PC-9 (cell line): ENCODE measurements at regions of chr12 and their contacts with region 1.

Region 1: DNA sequence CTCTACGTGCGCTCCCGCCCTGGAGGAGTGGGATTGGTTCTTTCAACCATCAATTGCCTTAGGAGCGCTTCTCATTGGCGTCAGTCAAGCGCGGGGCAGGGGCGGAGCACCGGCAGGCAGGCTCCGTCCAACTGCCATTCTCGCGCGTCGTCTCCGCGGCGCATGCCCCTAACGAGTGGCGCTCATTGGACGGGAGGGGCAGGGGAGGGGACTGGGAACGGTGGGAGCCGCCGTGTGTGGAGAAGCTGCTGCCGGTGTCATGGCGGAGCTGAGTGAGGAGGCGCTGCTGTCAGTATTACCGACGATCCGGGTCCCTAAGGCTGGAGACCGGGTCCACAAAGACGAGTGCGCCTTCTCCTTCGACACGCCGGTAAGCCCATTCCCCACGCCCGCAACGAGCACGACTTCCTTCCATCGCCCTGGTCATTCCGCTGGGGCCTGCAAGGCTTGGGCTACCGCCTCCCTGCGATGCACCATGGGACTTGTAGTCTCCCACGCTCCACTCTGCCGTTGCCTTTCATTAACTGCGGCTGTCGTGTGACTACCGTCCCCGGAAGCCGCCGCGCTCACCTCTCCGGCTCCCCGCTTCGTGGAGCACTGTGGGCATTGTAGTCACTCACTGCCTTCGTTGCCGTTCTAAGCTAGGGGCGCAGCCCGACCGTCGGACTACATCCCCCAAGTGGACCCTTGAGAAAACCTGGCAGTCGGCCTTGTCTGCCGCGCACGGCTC is at the start of gene USP5:
- DNase-seq: peak; percentile 99 to 100
- H3K4me3 ChIP-seq: peak within 1 kb of the TSS; percentile 83
- H3K27ac ChIP-seq: peak within 1 kb of the TSS; percentile 69
- H3K4me1 ChIP-seq: peaks cover 25% of the 10 kb centered on the region
- H3K27me3 ChIP-seq: no peaks in the 10 kb centered on the region
- CTCF ChIP-seq: no peak
- total RNA-seq, gene USP5: 267 and 308 TPM in 2 replicates

Region 2: DNA sequence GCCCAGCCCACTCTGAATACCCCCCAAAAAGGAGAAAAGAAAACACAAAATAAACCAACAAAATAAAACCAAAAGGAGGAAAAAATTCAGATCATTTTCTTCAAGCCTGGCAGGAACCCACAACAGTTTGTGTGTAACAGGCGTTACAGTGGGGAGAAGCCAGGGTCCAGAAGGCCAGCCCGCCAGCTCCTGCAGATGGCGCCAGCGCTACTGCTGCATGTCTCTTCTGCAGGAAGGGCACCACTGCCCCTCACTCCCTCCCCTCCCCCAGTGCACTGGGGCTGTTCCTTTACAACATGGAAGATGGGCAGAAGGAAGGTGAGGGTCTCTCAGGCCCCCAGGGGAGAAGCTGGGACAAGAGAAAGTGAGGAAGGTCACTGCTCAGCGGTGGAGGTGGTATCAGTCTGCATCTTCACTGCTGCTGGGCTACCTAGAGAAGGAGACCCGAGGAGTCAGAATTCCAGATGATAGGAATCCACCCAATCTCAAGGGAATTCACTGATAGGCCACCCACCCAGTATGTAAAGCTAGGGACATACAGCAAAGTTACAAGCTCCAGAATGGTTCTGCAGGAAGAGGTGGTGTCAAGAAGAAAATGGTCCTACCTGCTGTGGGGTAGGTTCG is 281.7 kb before region 1 on chr12:
- CTCF ChIA-PET with region 1: no interaction called
- POLR2A ChIA-PET with region 1: no interaction called
- intact Hi-C with region 1: loop called (anchors 5 kb)
- DNase-seq: peak; percentile 35 to 62
- H3K4me3 ChIP-seq: no peak overlapping the region
- H3K27ac ChIP-seq: no peak overlapping the region
- H3K4me1 ChIP-seq: peaks cover 16% of the 10 kb centered on the region
- H3K27me3 ChIP-seq: no peaks in the 10 kb centered on the region
- CTCF ChIP-seq: peak; percentile 58; the same call in 1 of the 2 replicates

Region 3: GRCh38 chr12:6764011-6764828 is 87.9 kb before region 1 on chr12:
- CTCF ChIA-PET with region 1: interaction called, 17 read pairs
- POLR2A ChIA-PET with region 1: interaction called, 31 read pairs
- intact Hi-C with region 1: loop called (anchors 1 kb)
- DNase-seq: peak; percentile 97 to 98
- H3K4me3 ChIP-seq: peak overlapping the region; percentile 21; the same call in 1 of the 2 replicates
- H3K27ac ChIP-seq: no peak overlapping the region; the same call in 1 of the 2 replicates
- H3K4me1 ChIP-seq: peaks cover 36% of the 10 kb centered on the region
- H3K27me3 ChIP-seq: no peaks in the 10 kb centered on the region
- CTCF ChIP-seq: no peak

Region 4: GRCh38 chr12:6890789-6891645 is 38.9 kb after region 1 on chr12:
- CTCF ChIA-PET with region 1: interaction called, 3 read pairs
- POLR2A ChIA-PET with region 1: interaction called, 3 read pairs
- intact Hi-C with region 1: loop called (anchors 1 kb)
- DNase-seq: peak; percentile 89 to 100
- H3K4me3 ChIP-seq: peak overlapping the region; percentile 57
- H3K27ac ChIP-seq: peak overlapping the region; percentile 90
- H3K4me1 ChIP-seq: peaks cover 15% of the 10 kb centered on the region
- H3K27me3 ChIP-seq: no peaks in the 10 kb centered on the region
- CTCF ChIP-seq: peak; percentile 74

Region 5: GRCh38 chr12:6970089-6970527 is 118.0 kb after region 1 on chr12:
- CTCF ChIA-PET with region 1: no interaction called
- POLR2A ChIA-PET with region 1: no interaction called
- intact Hi-C with region 1: no loop called
- DNase-seq: no peak
- H3K4me3 ChIP-seq: peak overlapping the region; percentile 82
- H3K27ac ChIP-seq: peak overlapping the region; percentile 90
- H3K4me1 ChIP-seq: peaks cover 37% of the 10 kb centered on the region
- H3K27me3 ChIP-seq: no peaks in the 10 kb centered on the region
- CTCF ChIP-seq: no peak

Region 6: DNA sequence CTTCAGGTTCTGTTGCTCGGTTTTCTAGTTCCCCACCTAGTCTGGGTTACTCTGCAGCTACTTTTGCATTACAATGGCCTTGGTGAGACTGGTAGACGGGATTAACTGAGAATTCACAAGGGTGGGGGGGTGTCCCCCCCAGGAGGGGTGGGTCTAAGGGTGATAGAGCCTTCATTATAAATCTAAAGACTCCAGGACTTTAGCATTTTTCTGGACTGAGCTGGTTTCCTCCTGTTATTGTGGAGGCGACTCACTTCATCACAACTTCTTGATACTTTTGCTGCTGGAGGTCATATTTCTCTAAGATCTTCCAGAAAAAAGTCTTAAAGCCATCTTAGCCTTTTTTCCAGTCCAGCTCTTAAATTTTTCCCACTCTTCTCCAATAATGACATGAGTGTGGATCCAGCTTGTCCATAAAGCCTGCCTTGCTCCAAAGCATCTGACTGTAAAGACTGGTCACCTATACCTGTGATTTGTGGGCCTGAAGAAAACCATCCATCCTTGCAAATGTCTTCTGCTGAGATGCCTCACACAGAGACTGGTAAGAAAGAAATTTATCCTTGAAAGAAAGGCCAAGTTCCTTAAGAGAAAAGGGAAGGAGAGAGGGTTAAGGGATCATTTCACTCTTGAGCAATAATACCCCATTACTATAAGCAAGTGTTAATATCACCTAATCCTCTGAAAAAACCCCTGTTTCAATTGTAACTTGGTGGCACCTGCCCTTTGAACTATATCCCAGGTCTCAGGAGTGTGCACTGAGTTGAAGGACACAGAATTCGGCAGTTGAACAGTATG is 1040.3 kb after region 1 on chr12:
- CTCF ChIA-PET with region 1: no interaction called
- POLR2A ChIA-PET with region 1: no interaction called
- intact Hi-C with region 1: no loop called
- DNase-seq: no peak
- H3K4me3 ChIP-seq: no peak overlapping the region
- H3K27ac ChIP-seq: no peak overlapping the region
- H3K4me1 ChIP-seq: peaks cover 21% of the 10 kb centered on the region
- H3K27me3 ChIP-seq: no peaks in the 10 kb centered on the region
- CTCF ChIP-seq: no peak